Panc1 (cell line): ENCODE measurements at regions of chr2 and their contacts with region 1.

Region 1: GRCh38 chr2:20411361-20411894 is 35.4 kb upstream of the RHOB start:
- DNase-seq: peak; percentile 72
- ATAC-seq: peak; percentile 100
- H3K4me3 ChIP-seq: no peak overlapping the region
- H3K27ac ChIP-seq: no peak overlapping the region
- H3K4me1 ChIP-seq: no peaks in the 10 kb centered on the region
- H3K27me3 ChIP-seq: no peaks in the 10 kb centered on the region
- CTCF ChIP-seq: peak; percentile 89

Region 2: DNA sequence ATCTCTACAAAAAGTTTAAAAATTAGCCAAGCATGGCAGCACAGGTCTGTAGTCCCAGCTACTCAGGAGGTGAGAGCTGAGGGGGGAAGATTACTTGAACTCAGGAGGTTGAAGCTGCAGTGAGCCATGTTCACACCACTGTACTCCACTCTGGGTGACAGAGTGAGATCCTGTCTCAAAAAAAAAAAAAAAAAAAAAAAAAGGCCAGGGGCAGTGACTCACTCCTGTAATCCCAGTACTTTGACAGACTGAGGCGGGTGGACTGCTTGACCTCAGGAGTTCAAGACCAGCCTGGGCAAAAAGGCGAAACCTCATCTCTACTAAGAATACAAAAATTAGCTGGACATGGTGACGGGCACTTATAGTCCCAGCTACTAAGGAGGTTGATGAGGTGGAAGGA is 97.8 kb before region 1 on chr2:
- CTCF ChIA-PET with region 1: interaction called, 10 read pairs
- POLR2A ChIA-PET with region 1: no interaction called
- in situ Hi-C with region 1: no loop called
- intact Hi-C with region 1: no loop called
- DNase-seq: no peak
- ATAC-seq: 0 out of 2 replicates have a peak, but pooled peaks have one; percentile 38
- H3K4me3 ChIP-seq: no peak overlapping the region
- H3K27ac ChIP-seq: no peak overlapping the region
- H3K4me1 ChIP-seq: no peaks in the 10 kb centered on the region
- H3K27me3 ChIP-seq: no peaks in the 10 kb centered on the region
- CTCF ChIP-seq: no peak

Region 3: DNA sequence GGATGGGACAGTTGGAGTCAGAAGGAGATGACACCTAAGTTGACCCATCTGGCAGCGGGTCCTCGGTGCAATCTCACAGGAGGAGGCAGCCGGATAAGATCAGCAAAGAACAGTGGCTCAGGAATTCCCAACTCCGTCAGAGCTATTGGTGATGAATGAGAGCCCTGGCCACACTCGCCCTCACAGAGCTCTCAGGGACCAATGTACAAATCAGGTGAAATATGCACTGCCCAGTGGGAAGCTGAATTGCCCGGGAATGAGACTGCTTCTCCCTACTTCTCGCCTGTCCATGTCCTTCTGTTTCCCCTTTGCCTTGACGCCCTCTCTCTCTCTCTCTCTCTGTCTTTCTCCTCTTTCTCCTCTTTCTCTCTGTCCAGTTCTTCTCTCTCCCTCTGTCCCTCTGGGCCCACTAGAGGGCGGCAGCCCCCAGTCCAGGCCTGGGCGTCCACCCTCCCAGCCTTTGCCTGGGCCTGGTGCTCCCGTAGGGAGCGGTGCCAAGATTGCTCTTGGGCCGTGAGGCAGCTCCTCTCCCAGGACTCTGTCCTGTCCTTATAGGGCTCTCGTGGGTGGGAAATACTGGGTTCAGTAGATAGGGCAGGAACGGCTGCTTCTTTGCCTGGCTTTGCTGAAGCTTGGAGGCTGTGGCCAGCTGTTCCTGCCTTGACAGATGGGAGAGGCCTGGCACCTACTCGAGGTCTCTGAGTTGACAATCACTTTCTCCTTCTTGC is 32.5 kb before region 1 on chr2:
- CTCF ChIA-PET with region 1: interaction called, 14 read pairs
- POLR2A ChIA-PET with region 1: no interaction called
- in situ Hi-C with region 1: no loop called
- intact Hi-C with region 1: no loop called
- DNase-seq: no peak
- ATAC-seq: peak; percentile 99
- H3K4me3 ChIP-seq: no peak overlapping the region
- H3K27ac ChIP-seq: no peak overlapping the region
- H3K4me1 ChIP-seq: no peaks in the 10 kb centered on the region; the same call in 1 of the 2 replicates
- H3K27me3 ChIP-seq: no peaks in the 10 kb centered on the region
- CTCF ChIP-seq: peak; percentile 91

Region 4: GRCh38 chr2:20438334-20439192 is 27.1 kb after region 1 on chr2:
- CTCF ChIA-PET with region 1: interaction called, 14 read pairs
- POLR2A ChIA-PET with region 1: interaction called, 3 read pairs
- in situ Hi-C with region 1: no loop called
- intact Hi-C with region 1: no loop called
- DNase-seq: peak; percentile 91
- ATAC-seq: peak; percentile 60; the same call in 1 of the 2 replicates
- H3K4me3 ChIP-seq: peak overlapping the region in 1 of 2 experiments; percentile 41; a peak in 2 of 4 replicates
- H3K27ac ChIP-seq: peak overlapping the region; percentile 4; the same call in 1 of the 2 replicates
- H3K4me1 ChIP-seq: peaks cover 21% of the 10 kb centered on the region
- H3K27me3 ChIP-seq: no peaks in the 10 kb centered on the region
- CTCF ChIP-seq: no peak

Region 5: GRCh38 chr2:20563833-20564232 is 152.4 kb after region 1 on chr2:
- CTCF ChIA-PET with region 1: interaction called, 13 read pairs
- POLR2A ChIA-PET with region 1: no interaction called
- in situ Hi-C with region 1: no loop called
- intact Hi-C with region 1: no loop called
- DNase-seq: no peak
- ATAC-seq: no peak
- H3K4me3 ChIP-seq: no peak overlapping the region
- H3K27ac ChIP-seq: no peak overlapping the region
- H3K4me1 ChIP-seq: no peaks in the 10 kb centered on the region
- H3K27me3 ChIP-seq: no peaks in the 10 kb centered on the region
- CTCF ChIP-seq: no peak

Region 6: GRCh38 chr2:20635675-20636584 is 224.5 kb after region 1 on chr2:
- CTCF ChIA-PET with region 1: interaction called, 23 read pairs
- POLR2A ChIA-PET with region 1: no interaction called
- in situ Hi-C with region 1: no loop called
- intact Hi-C with region 1: no loop called
- DNase-seq: no peak
- ATAC-seq: peak; percentile 97
- H3K4me3 ChIP-seq: no peak overlapping the region
- H3K27ac ChIP-seq: no peak overlapping the region
- H3K4me1 ChIP-seq: no peaks in the 10 kb centered on the region
- H3K27me3 ChIP-seq: no peaks in the 10 kb centered on the region
- CTCF ChIP-seq: peak; percentile 95